ENCODE measurements at regions of chr7 and their contacts with region 1.

Region 1: DNA sequence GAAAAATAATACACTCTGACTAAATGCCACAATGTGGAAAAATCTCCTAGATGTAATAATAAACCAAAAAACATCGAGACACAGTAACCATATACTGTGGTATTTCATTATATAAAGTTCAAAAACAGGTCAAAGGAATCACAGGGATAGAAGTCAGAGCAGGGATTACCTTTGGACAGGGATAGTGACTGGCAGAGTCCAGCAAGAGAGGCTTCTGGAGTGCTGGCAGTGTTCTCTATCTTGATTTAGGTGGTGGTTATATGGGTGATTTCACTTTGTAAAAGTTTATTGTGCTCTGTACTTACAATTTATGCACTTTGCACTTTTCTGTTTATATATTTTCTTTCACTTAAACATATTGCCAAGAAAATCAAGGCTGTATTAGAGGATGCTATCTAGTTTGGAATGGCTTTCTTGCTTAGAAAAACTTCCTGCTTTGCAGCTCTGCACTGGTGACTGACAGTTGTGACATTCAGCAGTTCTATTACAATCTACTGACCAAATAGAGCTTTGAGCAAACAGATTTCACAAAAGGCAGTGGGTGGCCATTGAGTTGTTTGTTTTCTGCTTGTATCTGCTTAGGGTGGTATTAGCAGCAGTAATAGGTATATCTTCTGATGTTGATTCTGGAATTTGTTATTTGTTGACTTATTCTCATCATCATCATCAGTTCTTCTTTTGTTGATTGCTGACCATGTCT is 263.6 kb upstream of the LRGUK start:
- DNase-seq: peak; percentile 75
- ATAC-seq: peak; percentile 99
- H3K4me3 ChIP-seq: no peak overlapping the region
- H3K27ac ChIP-seq: peak overlapping the region; percentile 44
- H3K4me1 ChIP-seq: peaks cover 14% of the 10 kb centered on the region
- H3K27me3 ChIP-seq: no peaks in the 10 kb centered on the region
- CTCF ChIP-seq: no peak
- EP300 ChIP-seq: no peak
- POLR2A ChIP-seq: no peak
- RAD21 ChIP-seq: no peak

Region 2: GRCh38 chr7:133983685-133984419 is 120.3 kb after region 1 on chr7:
- CTCF ChIA-PET with region 1: no interaction called
- POLR2A ChIA-PET with region 1: no interaction called
- in situ Hi-C with region 1: no loop called
- intact Hi-C with region 1: loop called (anchors 10 kb)
- DNase-seq: no peak
- ATAC-seq: no peak
- H3K4me3 ChIP-seq: no peak overlapping the region
- H3K27ac ChIP-seq: no peak overlapping the region
- H3K4me1 ChIP-seq: no peaks in the 10 kb centered on the region
- H3K27me3 ChIP-seq: no peaks in the 10 kb centered on the region
- CTCF ChIP-seq: no peak
- EP300 ChIP-seq: no peak
- POLR2A ChIP-seq: no peak
- RAD21 ChIP-seq: no peak